Common myeloid progenitor, CD34-positive (primary cell): ENCODE measurements at regions of chr19 and their contacts with region 1.

Region 1: DNA sequence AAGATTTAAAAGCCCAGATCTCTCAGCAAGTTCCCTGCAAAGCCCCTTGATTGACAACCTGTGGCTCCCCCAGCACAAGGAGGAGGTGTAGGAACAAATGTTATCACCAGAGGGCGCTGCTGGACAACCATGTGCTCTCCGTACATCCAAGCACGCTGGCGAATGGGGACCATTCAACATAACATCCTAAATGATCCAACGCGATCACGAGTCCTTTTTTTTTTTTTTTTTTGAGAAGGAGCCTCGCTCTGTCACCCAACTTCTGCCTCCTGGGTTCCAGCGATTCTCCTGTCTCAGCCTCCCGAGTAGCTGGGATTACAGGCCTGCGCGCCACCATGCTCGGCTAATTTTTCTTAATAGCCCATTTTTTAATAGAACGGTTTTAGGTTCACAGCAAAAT is 52.0 kb downstream of the NWD1 start:
- DNase-seq: peak; percentile 82 to 90 (median 85)
- H3K4me3 ChIP-seq: no peak overlapping the region
- H3K27ac ChIP-seq: no peak overlapping the region
- H3K4me1 ChIP-seq: no peaks in the 10 kb centered on the region
- H3K27me3 ChIP-seq: peaks cover 0 to 7% (median 0%) of the 10 kb centered on the region in 5 experiments

Region 2: GRCh38 chr19:16897154-16897855 is 125.7 kb after region 1 on chr19:
- CTCF ChIA-PET with region 1: interaction called, 13 read pairs
- POLR2A ChIA-PET with region 1: no interaction called
- DNase-seq: peak; percentile 73 to 79 (median 74)
- H3K4me3 ChIP-seq: peak overlapping the region in 6 of 7 experiments; percentile 15 to 61 (median 50)
- H3K27ac ChIP-seq: no peak overlapping the region
- H3K4me1 ChIP-seq: peaks cover 10 to 52% (median 45%) of the 10 kb centered on the region in 4 experiments
- H3K27me3 ChIP-seq: peaks cover 1 to 37% (median 9%) of the 10 kb centered on the region in 5 experiments

Region 3: GRCh38 chr19:17052439-17053210 is 281.0 kb after region 1 on chr19:
- CTCF ChIA-PET with region 1: interaction called, 10 read pairs
- POLR2A ChIA-PET with region 1: no interaction called
- DNase-seq: peak; percentile 43 to 66 (median 58)
- H3K4me3 ChIP-seq: no peak overlapping the region
- H3K27ac ChIP-seq: no peak overlapping the region
- H3K4me1 ChIP-seq: no peaks in the 10 kb centered on the region
- H3K27me3 ChIP-seq: no peaks in the 10 kb centered on the region